CD14-positive monocyte (primary cell): ENCODE measurements at regions of chr2 and their contacts with region 1.

Region 1: GRCh38 chr2:43226558-43226954 is at the start of gene ZFP36L2:
- DNase-seq: peak; percentile 91 to 93 (median 92)
- H3K4me3 ChIP-seq: peak within 1 kb of the TSS; percentile 83 to 99 (median 87)
- H3K4me3 Mint-ChIP-seq: peak within 1 kb of the TSS; percentile 93 to 100
- H3K27ac ChIP-seq: peak within 1 kb of the TSS; percentile 92 to 95
- H3K27ac Mint-ChIP-seq: peak within 1 kb of the TSS; percentile 95 to 98 (median 96)
- H3K4me1 ChIP-seq: peaks cover 33 to 62% of the 10 kb centered on the region in 2 donors
- H3K4me1 Mint-ChIP-seq: peaks cover 45% of the 10 kb centered on the region
- H3K27me3 ChIP-seq: no peaks in the 10 kb centered on the region
- H3K27me3 Mint-ChIP-seq: peaks cover 0 to 4% (median 0%) of the 10 kb centered on the region in 3 donors
- CTCF ChIP-seq: no peak
- polyA plus RNA-seq, gene ZFP36L2: 84.4 to 150 (median 88.3) TPM

Region 2: DNA sequence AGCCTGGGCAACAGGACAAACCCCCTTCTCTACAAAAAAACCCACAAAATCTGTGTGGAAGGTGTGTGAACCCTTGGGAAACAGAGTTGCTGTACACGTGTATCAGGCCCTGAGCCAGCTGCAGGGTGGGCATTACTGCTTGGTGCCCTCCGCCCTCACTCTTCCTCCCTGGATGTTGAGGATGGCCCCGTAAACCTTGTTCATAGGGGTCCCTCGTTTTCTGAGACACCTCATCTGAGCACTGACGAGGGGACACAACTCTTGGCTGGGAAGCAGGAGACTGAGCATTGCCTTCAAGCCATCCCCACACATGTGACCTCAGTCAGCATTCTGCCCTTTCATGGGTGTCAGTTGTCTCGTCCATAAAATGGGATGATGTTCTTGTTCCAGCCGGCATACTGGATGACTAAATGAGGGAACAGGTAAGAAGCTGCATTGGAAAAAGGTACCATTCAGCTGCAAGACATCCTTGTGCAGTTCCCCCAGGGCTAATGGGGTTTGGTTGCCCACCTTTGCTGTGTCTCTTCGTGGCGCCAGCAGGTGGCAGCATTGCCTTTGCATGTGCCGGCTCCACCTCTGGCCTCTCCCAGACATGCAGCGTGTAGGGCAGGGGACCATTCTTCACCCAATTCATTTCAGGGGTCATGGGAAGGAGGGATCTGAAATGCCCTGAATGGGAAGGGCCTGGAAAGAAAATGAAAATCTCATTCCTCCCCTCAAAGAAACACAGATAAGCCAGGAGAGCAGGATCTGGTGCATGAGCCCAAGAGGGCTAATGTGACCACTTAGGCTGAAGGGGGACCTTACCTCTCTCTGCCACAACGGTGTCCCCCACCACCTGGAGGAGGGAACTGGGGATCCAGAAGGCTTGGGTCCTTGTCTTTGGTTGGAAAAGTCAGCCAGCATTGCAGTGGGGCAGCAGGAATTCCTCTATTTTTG is 397.8 kb before region 1 on chr2:
- intact Hi-C with region 1: loop called in 1 of 2 experiments (anchors 10 kb)
- DNase-seq: peak; percentile 59 to 70 (median 62)
- H3K4me3 ChIP-seq: no peak overlapping the region
- H3K4me3 Mint-ChIP-seq: no peak overlapping the region
- H3K27ac ChIP-seq: no peak overlapping the region
- H3K27ac Mint-ChIP-seq: peak overlapping the region in 2 of 7 donors; percentile 30 to 45
- H3K4me1 ChIP-seq: peaks cover 7 to 9% of the 10 kb centered on the region in 2 donors
- H3K4me1 Mint-ChIP-seq: peaks cover 16% of the 10 kb centered on the region
- H3K27me3 ChIP-seq: no peaks in the 10 kb centered on the region
- H3K27me3 Mint-ChIP-seq: peaks cover 0 to 6% (median 2%) of the 10 kb centered on the region in 3 donors
- CTCF ChIP-seq: peak; percentile 96

Region 3: DNA sequence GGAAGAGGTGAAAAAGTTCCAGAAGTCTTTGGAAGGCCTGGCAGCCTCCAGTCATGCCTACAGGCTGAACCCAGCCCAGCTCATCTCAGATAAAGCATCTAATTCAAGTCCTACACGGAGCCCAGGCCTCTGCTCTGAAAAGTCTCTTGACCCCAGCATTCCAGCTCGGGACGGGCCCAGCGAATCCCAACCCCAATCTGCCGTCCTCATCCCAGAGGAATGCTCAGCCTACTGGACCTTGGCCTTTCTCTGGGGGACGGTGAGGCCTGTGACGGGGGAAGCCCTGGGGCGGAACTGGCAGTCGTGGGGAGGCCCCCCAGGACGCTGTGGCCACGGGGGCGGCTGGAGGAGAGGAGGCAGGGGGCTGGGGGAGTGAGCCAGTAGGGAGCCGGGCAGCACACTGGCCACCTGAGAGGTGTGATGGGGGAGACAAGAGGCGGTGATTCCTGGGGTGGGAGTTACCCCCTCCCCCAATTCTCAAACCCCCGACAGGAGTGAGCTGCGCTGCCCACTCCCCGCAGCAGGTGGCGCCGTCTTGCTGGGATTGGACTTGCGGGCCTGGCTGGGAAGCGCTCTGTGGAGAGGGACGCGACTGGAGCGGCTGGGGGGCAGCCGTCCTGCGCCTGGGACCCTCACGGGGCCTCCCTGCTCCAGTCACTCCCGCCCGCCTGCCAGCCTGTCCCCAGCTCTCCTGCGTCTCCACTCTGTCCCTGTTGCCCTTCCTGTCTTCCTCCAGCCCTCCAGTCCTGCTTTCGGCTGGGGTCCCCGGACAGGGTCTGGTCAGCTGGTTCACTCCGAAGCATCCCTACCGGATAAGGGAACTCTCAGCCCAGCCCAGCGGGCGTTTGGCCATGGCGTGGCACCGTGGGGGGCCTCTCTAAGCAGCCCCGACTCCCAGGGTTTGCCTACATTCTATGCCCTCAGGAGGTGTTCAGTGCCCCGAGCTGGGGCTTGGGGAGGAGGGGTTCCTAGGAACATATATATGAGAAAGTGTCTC is 251.5 kb before region 1 on chr2:
- intact Hi-C with region 1: loop called (anchors 2 kb)
- DNase-seq: peak; percentile 35 to 65 (median 46)
- H3K4me3 ChIP-seq: peak overlapping the region; percentile 17 to 72 (median 48)
- H3K4me3 Mint-ChIP-seq: peak overlapping the region; percentile 72 to 87
- H3K27ac ChIP-seq: peak overlapping the region; percentile 49 to 83
- H3K27ac Mint-ChIP-seq: peak overlapping the region; percentile 43 to 90 (median 83)
- H3K4me1 ChIP-seq: peaks cover 41 to 59% of the 10 kb centered on the region in 2 donors
- H3K4me1 Mint-ChIP-seq: peaks cover 71% of the 10 kb centered on the region
- H3K27me3 ChIP-seq: no peaks in the 10 kb centered on the region
- H3K27me3 Mint-ChIP-seq: peaks cover 0 to 3% (median 0%) of the 10 kb centered on the region in 3 donors
- CTCF ChIP-seq: peak; percentile 95

Region 4: DNA sequence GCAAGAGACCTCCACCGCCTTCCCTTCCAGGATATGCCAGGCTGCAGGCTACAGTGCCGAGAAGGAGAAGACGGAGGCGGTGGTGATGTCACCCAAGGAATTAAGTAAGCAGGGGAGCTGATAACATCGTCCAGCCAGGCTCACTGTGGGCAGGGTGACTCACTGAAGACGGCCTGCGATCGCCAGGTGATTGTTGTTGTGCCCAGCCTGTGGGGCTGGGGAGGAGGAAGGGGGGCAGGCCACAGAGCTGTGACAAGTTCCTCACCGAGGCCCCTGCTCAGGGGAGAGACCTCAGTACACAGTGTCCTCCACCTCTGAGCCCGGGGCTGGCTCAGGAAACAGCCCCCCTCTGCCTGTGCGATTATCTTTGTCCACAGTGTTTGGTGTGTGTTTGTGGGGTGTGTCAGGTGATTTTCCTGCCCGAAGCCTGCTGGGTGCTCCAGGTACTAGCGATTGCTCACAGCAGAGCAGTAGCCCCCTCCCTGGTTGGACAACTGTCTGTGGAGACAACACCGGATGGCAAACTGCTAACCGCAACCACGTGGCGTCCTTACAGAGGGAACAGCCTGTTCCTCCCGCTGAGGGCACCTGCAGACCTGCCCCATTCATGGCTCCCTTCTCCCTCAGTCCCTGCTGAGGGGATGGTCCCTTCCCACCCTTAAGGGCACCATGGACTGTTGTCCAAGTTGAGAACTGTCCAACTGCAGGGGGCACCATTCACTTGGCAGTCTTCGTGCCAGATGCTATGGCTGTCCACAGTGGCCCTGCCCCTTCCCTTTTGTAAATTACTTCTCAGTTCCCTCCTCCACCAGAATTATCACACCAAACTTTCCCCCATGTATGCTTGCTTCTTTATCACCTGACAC is 95.3 kb before region 1 on chr2:
- intact Hi-C with region 1: loop called (anchors 1 to 5 kb)
- DNase-seq: peak; percentile 88 to 94 (median 92)
- H3K4me3 ChIP-seq: peak overlapping the region in 2 of 3 experiments; percentile 6 to 65
- H3K4me3 Mint-ChIP-seq: peak overlapping the region; percentile 52 to 73
- H3K27ac ChIP-seq: peak overlapping the region; percentile 92 to 96
- H3K27ac Mint-ChIP-seq: peak overlapping the region; percentile 92 to 99 (median 97)
- H3K4me1 ChIP-seq: peaks cover 100% of the 10 kb centered on the region in 2 donors
- H3K4me1 Mint-ChIP-seq: peaks cover 98% of the 10 kb centered on the region
- H3K27me3 ChIP-seq: no peaks in the 10 kb centered on the region
- H3K27me3 Mint-ChIP-seq: peaks cover 0 to 2% (median 0%) of the 10 kb centered on the region in 3 donors
- CTCF ChIP-seq: peak; percentile 84

Region 5: DNA sequence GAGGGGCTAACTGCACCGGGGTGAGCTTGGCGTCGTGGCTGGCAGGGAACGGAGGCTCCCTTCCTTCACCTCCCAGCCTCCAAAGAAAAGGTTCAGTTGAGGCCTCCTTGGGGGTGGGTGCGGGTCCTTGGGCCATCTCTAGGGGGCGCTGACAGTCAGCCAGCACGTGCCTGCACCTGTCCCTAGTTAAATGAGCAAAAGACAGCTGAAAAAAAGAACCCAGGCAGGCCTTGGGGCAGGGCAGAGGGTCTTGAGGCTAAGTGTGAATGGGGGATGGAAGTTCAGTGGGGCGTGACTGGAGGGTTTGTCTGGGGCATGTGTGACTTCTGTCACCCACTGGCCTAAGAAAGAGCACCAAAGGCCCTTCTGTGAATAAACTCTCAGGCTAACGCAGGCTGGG is 56.6 kb before region 1 on chr2:
- intact Hi-C with region 1: loop called in 1 of 2 experiments (anchors 2 kb)
- DNase-seq: peak in 1 of 3 donors; percentile 38
- H3K4me3 ChIP-seq: peak overlapping the region in 1 of 3 experiments; percentile 72
- H3K4me3 Mint-ChIP-seq: peak overlapping the region; percentile 80 to 95
- H3K27ac ChIP-seq: peak overlapping the region; percentile 91 to 92
- H3K27ac Mint-ChIP-seq: peak overlapping the region; percentile 98 to 100 (median 99)
- H3K4me1 ChIP-seq: peaks cover 84 to 92% of the 10 kb centered on the region in 2 donors
- H3K4me1 Mint-ChIP-seq: peaks cover 86% of the 10 kb centered on the region
- H3K27me3 ChIP-seq: no peaks in the 10 kb centered on the region
- H3K27me3 Mint-ChIP-seq: peaks cover 0 to 4% (median 2%) of the 10 kb centered on the region in 3 donors
- CTCF ChIP-seq: peak; percentile 76

Region 6: GRCh38 chr2:43358410-43359201 is 132.1 kb after region 1 on chr2:
- intact Hi-C with region 1: no loop called
- DNase-seq: no peak
- H3K4me3 ChIP-seq: no peak overlapping the region
- H3K4me3 Mint-ChIP-seq: no peak overlapping the region
- H3K27ac ChIP-seq: no peak overlapping the region
- H3K27ac Mint-ChIP-seq: no peak overlapping the region
- H3K4me1 ChIP-seq: peaks cover 0 to 3% of the 10 kb centered on the region in 2 donors
- H3K4me1 Mint-ChIP-seq: peaks cover 18% of the 10 kb centered on the region
- H3K27me3 ChIP-seq: no peaks in the 10 kb centered on the region
- H3K27me3 Mint-ChIP-seq: no peaks in the 10 kb centered on the region
- CTCF ChIP-seq: no peak

Region 7: GRCh38 chr2:43542285-43542937 is 315.9 kb after region 1 on chr2:
- intact Hi-C with region 1: loop called (anchors 5 kb)
- DNase-seq: peak; percentile 32 to 59 (median 47)
- H3K4me3 ChIP-seq: no peak overlapping the region
- H3K4me3 Mint-ChIP-seq: no peak overlapping the region
- H3K27ac ChIP-seq: no peak overlapping the region
- H3K27ac Mint-ChIP-seq: no peak overlapping the region
- H3K4me1 ChIP-seq: peaks cover 29 to 39% of the 10 kb centered on the region in 2 donors
- H3K4me1 Mint-ChIP-seq: peaks cover 35% of the 10 kb centered on the region
- H3K27me3 ChIP-seq: no peaks in the 10 kb centered on the region
- H3K27me3 Mint-ChIP-seq: no peaks in the 10 kb centered on the region
- CTCF ChIP-seq: peak; percentile 79